ENCODE measurements at regions of chr4 and their contacts with region 1.

Region 1: DNA sequence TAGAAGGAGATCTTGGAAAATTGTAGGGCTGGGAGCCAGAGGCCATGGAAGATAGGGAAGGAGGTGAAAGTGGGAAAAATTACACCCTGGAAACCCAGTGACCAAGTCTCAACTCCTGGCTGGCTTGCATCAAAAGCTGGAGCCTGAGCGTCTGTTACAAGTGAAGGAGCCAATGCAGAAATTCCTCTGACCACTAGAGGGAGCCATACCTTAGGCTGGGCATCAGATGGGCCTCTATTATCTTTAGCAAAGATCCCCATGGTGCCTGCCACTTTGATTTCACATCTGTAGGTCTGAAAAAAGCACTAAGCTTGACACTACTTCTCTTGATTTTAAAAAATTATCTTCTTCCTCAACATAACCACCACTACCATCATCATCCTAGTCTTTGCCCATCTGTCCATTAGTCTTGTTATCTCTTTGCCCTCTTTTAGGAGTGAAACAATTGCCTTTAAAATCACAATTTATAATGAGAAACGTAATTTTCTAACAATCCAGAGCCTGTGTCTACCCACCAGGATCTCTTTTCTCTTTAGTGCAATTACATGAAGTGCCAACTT is 62.9 kb downstream of the ANAPC4 start:
- DNase-seq: peak in 1 of 2 experiments; percentile 84
- H3K4me3 ChIP-seq: no peak overlapping the region
- H3K27ac ChIP-seq: no peak overlapping the region
- H3K4me1 ChIP-seq: no peaks in the 10 kb centered on the region; a peak in 2 of 7 replicates
- H3K27me3 ChIP-seq: no peaks in the 10 kb centered on the region
- CTCF ChIP-seq: peak; percentile 47 to 92 (median 87)
- EP300 ChIP-seq: no peak
- POLR2A ChIP-seq: no peak
- RAD21 ChIP-seq: peak; percentile 88 to 89

Region 2: GRCh38 chr4:25113915-25114904 is 325.8 kb before region 1 on chr4:
- CTCF ChIA-PET with region 1: no interaction called
- POLR2A ChIA-PET with region 1: no interaction called
- DNase-seq: no peak
- H3K4me3 ChIP-seq: no peak overlapping the region
- H3K27ac ChIP-seq: no peak overlapping the region
- H3K4me1 ChIP-seq: no peaks in the 10 kb centered on the region
- H3K27me3 ChIP-seq: no peaks in the 10 kb centered on the region
- CTCF ChIP-seq: no peak
- EP300 ChIP-seq: no peak
- POLR2A ChIP-seq: no peak
- RAD21 ChIP-seq: no peak

Region 3: DNA sequence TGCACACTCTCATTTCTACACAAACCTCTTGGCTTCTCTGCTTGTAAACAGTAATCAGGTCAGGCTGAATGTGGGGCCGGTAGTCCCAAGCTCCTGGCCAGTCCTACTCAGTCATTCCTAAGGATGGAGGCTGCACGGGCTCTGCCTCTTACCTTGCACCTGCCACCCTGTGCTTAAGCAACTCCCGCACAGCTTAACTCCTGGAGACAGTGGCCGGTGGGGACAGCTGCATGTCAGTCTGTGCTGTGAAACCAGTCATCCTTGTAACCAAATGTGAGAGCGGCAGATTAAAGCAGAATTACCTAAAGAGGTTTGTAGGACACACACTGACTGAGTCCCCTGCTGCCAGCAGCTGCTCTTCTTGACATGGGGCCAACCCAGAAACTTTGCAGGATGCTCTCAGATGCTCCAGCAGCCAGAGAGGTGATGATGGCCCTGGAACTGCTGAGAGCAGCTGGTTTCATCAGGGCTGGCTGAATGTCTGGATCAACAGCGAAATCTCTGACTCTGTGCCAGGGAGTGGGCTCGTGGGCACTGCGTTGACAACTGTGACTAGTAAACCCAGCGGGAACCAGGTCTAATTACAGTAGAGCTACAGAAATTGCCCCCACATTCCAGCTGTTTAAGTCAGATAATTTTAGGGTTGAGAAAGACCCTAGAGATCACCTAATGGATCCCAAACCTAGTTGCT is 60.8 kb after region 1 on chr4:
- CTCF ChIA-PET with region 1: interaction called, 26 read pairs
- POLR2A ChIA-PET with region 1: no interaction called
- DNase-seq: no peak
- H3K4me3 ChIP-seq: no peak overlapping the region
- H3K27ac ChIP-seq: no peak overlapping the region
- H3K4me1 ChIP-seq: no peaks in the 10 kb centered on the region
- H3K27me3 ChIP-seq: no peaks in the 10 kb centered on the region
- CTCF ChIP-seq: no peak
- EP300 ChIP-seq: no peak
- POLR2A ChIP-seq: no peak
- RAD21 ChIP-seq: no peak

Region 4: DNA sequence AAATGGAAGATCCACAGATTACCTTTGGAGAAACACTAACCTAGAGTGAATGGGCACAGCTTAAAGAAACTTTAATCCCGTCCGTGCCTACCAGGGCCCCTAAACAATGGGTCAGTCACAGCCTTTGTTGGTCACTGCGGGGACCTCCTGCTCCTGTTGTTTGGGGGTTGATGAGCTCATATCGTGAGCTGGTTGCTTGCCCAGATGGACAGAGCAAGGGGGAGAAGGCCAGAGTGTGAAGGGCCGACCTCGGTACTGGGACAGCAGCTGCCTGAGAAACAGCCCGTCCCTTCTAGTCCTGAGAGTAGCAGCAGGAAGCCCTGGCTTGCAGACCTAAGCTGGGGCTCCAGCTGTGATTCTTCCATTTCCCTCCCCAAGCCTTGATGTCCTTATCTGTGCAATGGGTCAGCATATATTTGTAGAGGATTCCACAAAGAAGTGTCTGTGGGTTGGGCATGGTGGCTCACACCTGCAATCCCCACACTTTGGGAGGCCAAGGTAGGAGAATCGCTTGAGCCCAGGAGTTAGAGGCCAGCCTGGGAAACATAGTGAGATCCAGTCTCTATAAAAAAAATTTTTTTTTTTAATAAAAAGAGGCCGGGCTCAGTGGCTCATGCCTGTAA is 146.0 kb after region 1 on chr4:
- CTCF ChIA-PET with region 1: interaction called, 25 read pairs
- POLR2A ChIA-PET with region 1: no interaction called
- DNase-seq: no peak
- H3K4me3 ChIP-seq: no peak overlapping the region
- H3K27ac ChIP-seq: no peak overlapping the region; the same call in 1 of the 2 replicates
- H3K4me1 ChIP-seq: peaks cover 0 to 19% (median 8%) of the 10 kb centered on the region in 4 experiments; a peak in 6 of 7 replicates
- H3K27me3 ChIP-seq: no peaks in the 10 kb centered on the region
- CTCF ChIP-seq: no peak
- EP300 ChIP-seq: no peak
- POLR2A ChIP-seq: no peak
- RAD21 ChIP-seq: no peak

Region 5: DNA sequence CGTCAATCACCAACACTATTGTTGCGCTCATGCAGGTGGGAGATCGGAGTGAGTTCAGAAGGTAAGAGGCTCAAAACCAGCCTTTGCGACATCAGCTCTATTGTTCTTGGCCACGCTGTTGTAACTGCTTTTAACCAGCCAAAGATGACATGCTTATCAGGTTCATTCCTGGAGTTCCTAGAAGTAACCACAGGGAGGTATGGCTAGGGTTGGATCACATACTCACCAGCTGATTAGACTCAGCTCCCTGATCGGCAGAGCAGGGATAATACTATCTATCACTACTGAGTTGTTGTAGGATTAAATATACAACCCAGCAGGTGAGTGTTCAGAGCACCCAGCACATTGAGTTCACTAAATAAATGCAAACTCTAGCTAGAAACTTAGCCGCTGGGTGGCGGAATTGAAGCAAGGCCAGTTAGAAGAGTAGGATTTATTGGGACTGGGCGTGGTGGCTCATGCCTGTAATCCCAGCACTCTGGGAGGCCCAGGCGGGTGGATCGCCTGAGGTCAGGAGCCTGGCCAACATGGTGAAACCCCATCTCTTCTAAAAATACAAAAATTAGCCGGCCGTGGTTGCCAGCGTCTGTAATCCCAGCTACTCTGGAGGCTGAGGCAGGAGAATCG is 228.0 kb after region 1 on chr4:
- CTCF ChIA-PET with region 1: interaction called, 12 read pairs
- POLR2A ChIA-PET with region 1: no interaction called
- DNase-seq: no peak
- H3K4me3 ChIP-seq: no peak overlapping the region
- H3K27ac ChIP-seq: no peak overlapping the region
- H3K4me1 ChIP-seq: peaks cover 0 to 7% (median 3%) of the 10 kb centered on the region in 4 experiments; a peak in 5 of 7 replicates
- H3K27me3 ChIP-seq: no peaks in the 10 kb centered on the region
- CTCF ChIP-seq: peak in 1 of 3 experiments; percentile 4; a peak in 1 of 4 replicates
- EP300 ChIP-seq: no peak
- POLR2A ChIP-seq: no peak
- RAD21 ChIP-seq: peak in 1 of 2 experiments; percentile 35; a peak in 2 of 4 replicates

Region 6: GRCh38 chr4:25743971-25744370 is 304.0 kb after region 1 on chr4:
- CTCF ChIA-PET with region 1: interaction called, 36 read pairs
- POLR2A ChIA-PET with region 1: no interaction called
- DNase-seq: no peak
- H3K4me3 ChIP-seq: no peak overlapping the region
- H3K27ac ChIP-seq: no peak overlapping the region
- H3K4me1 ChIP-seq: no peaks in the 10 kb centered on the region
- H3K27me3 ChIP-seq: no peaks in the 10 kb centered on the region
- CTCF ChIP-seq: no peak
- EP300 ChIP-seq: no peak
- POLR2A ChIP-seq: no peak
- RAD21 ChIP-seq: no peak

Region 7: DNA sequence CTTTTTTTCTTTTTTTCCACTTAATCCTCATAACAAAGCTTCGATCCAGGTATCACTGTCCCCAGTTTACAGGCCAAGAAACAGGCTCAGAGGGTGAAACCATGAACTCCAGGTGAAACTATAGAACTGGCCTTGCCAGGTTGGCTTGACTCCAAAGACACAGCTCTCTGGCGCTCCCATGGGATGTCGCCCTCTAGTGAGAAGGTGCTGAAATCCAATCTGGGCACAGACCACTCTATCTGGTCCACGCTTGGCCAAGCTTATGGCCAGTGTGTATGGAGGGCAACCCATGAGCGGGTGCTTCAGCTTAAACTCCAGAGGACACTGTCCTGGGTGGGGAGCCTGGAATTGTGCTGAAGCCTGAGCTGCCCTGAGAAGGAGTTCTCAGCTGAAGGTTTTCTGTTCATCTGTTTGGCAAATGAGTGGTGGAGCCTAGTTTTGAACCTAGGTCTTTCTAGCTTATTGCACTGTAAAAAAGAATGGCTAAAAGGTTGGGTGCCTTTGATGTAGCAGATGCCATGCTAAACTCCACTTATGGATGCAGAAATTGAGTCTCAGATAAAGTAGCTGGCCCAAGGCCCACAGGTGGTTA is 352.3 kb after region 1 on chr4:
- CTCF ChIA-PET with region 1: interaction called, 28 read pairs
- POLR2A ChIA-PET with region 1: no interaction called
- DNase-seq: peak in 1 of 2 experiments; percentile 71
- H3K4me3 ChIP-seq: no peak overlapping the region
- H3K27ac ChIP-seq: no peak overlapping the region
- H3K4me1 ChIP-seq: peaks cover 1 to 13% (median 6%) of the 10 kb centered on the region in 4 experiments; a peak in 3 of 7 replicates
- H3K27me3 ChIP-seq: no peaks in the 10 kb centered on the region
- CTCF ChIP-seq: peak; percentile 80 to 92 (median 80)
- EP300 ChIP-seq: no peak
- POLR2A ChIP-seq: no peak
- RAD21 ChIP-seq: peak; percentile 72 to 78

Region 8: GRCh38 chr4:25879991-25880651 is 440.1 kb after region 1 on chr4:
- CTCF ChIA-PET with region 1: no interaction called
- POLR2A ChIA-PET with region 1: no interaction called
- DNase-seq: no peak
- H3K4me3 ChIP-seq: no peak overlapping the region
- H3K27ac ChIP-seq: no peak overlapping the region
- H3K4me1 ChIP-seq: peaks cover 0 to 3% (median 0%) of the 10 kb centered on the region in 4 experiments; a peak in 1 of 7 replicates
- H3K27me3 ChIP-seq: no peaks in the 10 kb centered on the region; a peak in 1 of 7 replicates
- CTCF ChIP-seq: no peak
- EP300 ChIP-seq: no peak
- POLR2A ChIP-seq: no peak
- RAD21 ChIP-seq: no peak

Measured in H1 (cell line).